ENCODE measurements at regions of chr12 and their contacts with region 1.

Region 1: DNA sequence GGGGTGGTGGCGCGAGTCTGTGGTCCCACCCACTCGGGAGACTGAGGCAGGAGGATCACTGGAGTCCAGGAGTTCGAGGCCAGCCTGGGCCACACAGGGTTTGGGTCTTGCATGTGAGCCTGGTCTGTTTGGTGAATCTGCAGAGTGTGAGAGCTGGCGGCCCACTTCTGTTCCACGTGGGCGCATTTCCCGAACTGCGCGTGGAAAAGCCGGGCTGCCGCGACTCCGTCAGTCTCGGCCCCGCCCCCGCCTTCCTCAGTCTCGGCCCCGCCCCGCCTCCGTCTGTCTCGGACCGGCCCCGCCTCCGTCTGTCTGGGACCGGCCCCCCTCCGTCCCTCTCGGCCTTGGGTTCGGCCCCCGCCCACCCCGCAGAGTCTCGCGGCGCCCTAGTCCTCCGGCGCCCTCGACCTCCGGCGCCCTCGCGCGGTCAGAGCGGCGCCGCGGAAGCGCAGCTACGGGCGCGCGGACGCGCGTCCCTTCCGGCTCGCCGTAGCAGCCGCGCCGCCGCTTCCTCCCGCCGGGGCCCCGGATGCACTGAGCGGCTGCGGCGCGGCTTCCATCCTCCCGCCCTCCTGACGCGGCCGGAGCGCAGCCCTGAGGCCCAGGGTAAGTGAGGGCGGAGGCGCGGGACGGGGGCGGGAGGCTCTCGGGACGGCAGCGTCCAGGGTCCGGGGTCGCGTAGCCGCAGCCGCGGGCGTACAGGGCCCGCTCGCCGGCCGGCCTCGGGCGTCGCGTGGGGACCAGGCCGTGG is at the start of gene EP400:
- DNase-seq: peak; percentile 89
- H3K4me3 Mint-ChIP-seq: peak within 1 kb of the TSS; percentile 92
- H3K27ac Mint-ChIP-seq: peak within 1 kb of the TSS; percentile 90
- H3K4me1 Mint-ChIP-seq: peaks cover 30% of the 10 kb centered on the region
- H3K27me3 Mint-ChIP-seq: no peaks in the 10 kb centered on the region
- total RNA-seq, gene EP400: 66.6 TPM in 2 replicates

Region 2: DNA sequence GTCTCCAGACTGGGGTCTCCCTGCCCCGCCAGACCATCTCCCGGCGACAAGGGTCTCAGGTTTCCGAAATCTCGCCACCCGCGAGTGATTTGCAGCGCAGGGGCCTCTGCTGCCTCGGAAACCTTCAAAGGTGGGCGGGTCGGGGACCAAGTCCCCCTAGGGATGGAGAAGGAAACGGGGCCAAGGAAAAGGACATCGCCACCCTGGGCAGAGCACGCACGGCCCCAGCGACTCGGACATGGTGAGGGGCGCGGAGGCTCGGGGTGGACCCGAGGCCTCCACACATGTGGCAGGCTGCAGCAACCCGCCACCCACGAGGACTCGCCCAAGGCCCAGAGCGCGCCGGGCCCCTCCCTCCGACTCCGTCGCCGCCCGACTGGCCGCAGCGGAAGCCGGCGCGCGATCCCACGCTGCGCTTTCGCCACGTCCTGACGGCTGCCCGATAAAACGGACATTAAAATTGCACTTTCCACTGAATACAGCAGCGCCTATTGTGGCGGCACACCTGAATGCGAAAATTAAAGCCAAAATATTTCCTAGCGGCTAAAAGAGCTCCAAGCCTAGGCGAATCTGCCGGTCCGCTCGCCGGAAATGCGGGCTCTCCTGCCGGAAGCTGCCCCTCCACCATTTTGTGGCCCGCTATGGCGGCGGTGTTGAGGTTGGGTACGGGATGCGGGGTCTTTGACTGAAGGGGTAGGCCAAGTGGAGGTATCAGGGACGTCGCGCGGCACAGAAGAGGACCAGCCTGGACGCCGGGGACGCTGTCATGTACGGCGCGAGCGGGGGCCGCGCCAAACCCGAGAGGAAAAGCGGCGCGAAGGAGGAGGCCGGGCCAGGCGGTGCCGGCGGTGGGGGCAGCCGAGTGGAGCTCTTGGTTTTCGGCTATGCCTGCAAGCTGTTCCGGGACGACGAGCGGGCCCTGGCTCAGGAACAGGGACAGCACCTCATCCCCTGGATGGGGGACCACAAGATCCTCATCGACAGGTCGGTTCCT is 238.8 kb before region 1 on chr12 and contains the start of gene SFSWAP:
- intact Hi-C with region 1: loop called (anchors 1 kb)
- DNase-seq: peak; percentile 72
- H3K4me3 Mint-ChIP-seq: peak within 1 kb of the TSS; percentile 93
- H3K27ac Mint-ChIP-seq: peak within 1 kb of the TSS; percentile 92
- H3K4me1 Mint-ChIP-seq: peaks cover 26% of the 10 kb centered on the region
- H3K27me3 Mint-ChIP-seq: peaks cover 4% of the 10 kb centered on the region
- total RNA-seq, gene SFSWAP: 65.3 and 69.3 TPM in 2 replicates

Region 3: GRCh38 chr12:131830335-131830913 is 119.2 kb before region 1 on chr12:
- intact Hi-C with region 1: loop called (anchors 2 kb)
- DNase-seq: peak; percentile 18
- H3K4me3 Mint-ChIP-seq: peak overlapping the region; percentile 62
- H3K27ac Mint-ChIP-seq: no peak overlapping the region
- H3K4me1 Mint-ChIP-seq: no peaks in the 10 kb centered on the region
- H3K27me3 Mint-ChIP-seq: peaks cover 38% of the 10 kb centered on the region

Region 4: GRCh38 chr12:131928711-131929580 is 20.7 kb before region 1 on chr12 and contains the start of gene PUS1:
- intact Hi-C with region 1: loop called (anchors 1 kb)
- DNase-seq: peak; percentile 93
- H3K4me3 Mint-ChIP-seq: peak within 1 kb of the TSS; percentile 98
- H3K27ac Mint-ChIP-seq: peak within 1 kb of the TSS; percentile 95
- H3K4me1 Mint-ChIP-seq: peaks cover 13% of the 10 kb centered on the region
- H3K27me3 Mint-ChIP-seq: no peaks in the 10 kb centered on the region
- total RNA-seq, gene PUS1: 92.1 and 100.0 TPM in 2 replicates

Region 5: DNA sequence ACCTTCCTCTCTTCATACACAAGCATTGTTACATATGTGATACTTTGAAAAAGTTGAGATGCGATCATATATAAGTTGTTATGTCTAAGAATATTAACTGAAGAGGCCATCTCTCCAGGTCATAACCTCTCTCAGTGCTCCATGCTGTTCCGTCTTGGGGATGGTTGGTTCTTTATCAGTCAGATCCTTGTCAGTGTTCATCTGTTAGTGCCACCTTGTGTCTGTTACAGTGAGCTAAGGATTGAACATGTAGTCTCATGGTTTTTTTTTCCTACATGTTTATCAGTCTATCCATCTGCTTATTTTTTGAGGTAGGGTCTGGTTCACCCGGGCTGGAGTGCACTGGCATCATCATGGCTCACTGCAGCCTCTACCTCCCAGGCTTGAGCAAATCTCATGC is 30.7 kb after region 1 on chr12:
- intact Hi-C with region 1: no loop called
- DNase-seq: no peak
- H3K4me3 Mint-ChIP-seq: no peak overlapping the region
- H3K27ac Mint-ChIP-seq: no peak overlapping the region
- H3K4me1 Mint-ChIP-seq: peaks cover 10% of the 10 kb centered on the region
- H3K27me3 Mint-ChIP-seq: no peaks in the 10 kb centered on the region

Measured in activated T-helper 1 cell treated with anti-CD3 and anti-CD28 coated beads, Interleukin-12 subunit alpha, Interleukin-12 subunit beta, Interleukin-2, Interleukin-4 antibody, amounts not matched to agents 30 ng/mL and 10 ng/mL and 1 ng/mL, durations not matched to agents 14 hours and 24 hours and 36 hours (primary cell).